Activated CD4-positive, alpha-beta T cell treated with anti-CD3 and anti-CD28 coated beads for 36 hours (primary cell): ENCODE measurements at regions of chr2 and their contacts with region 1.

Region 1: GRCh38 chr2:36650031-36650430 is 46.5 kb upstream of the VIT start:
- DNase-seq: peak; percentile 41
- ATAC-seq: peak; percentile 93
- H3K4me3 Mint-ChIP-seq: no peak overlapping the region
- H3K27ac Mint-ChIP-seq: no peak overlapping the region
- H3K4me1 Mint-ChIP-seq: no peaks in the 10 kb centered on the region
- H3K27me3 Mint-ChIP-seq: peaks cover 2% of the 10 kb centered on the region

Region 2: GRCh38 chr2:36507408-36507812 is 142.6 kb before region 1 on chr2:
- CTCF ChIA-PET with region 1: no interaction called
- POLR2A ChIA-PET with region 1: no interaction called
- intact Hi-C with region 1: loop called in 1 of 2 experiments (anchors 5 kb)
- DNase-seq: peak; percentile 57
- ATAC-seq: peak; percentile 92
- H3K4me3 Mint-ChIP-seq: no peak overlapping the region
- H3K27ac Mint-ChIP-seq: no peak overlapping the region
- H3K4me1 Mint-ChIP-seq: no peaks in the 10 kb centered on the region
- H3K27me3 Mint-ChIP-seq: no peaks in the 10 kb centered on the region